Left ventricle myocardium inferior (tissue), 1 donor: ENCODE measurements at regions of chr15 and their contacts with region 1.

Region 1: GRCh38 chr15:73375755-73376305 is 7.1 kb upstream of the HCN4 start:
- DNase-seq: peak; percentile 42
- H3K4me3 ChIP-seq: no peak overlapping the region
- H3K27ac ChIP-seq: peak overlapping the region; percentile 86
- H3K4me1 ChIP-seq: peaks cover 22% of the 10 kb centered on the region
- H3K27me3 ChIP-seq: peaks cover 35% of the 10 kb centered on the region
- CTCF ChIP-seq: no peak

Region 2: GRCh38 chr15:73522011-73522410 is 146.2 kb after region 1 on chr15:
- intact Hi-C with region 1: loop called (anchors 10 kb)
- DNase-seq: no peak
- H3K4me3 ChIP-seq: no peak overlapping the region
- H3K27ac ChIP-seq: no peak overlapping the region
- H3K4me1 ChIP-seq: peaks cover 20% of the 10 kb centered on the region
- H3K27me3 ChIP-seq: no peaks in the 10 kb centered on the region
- CTCF ChIP-seq: no peak